Caco-2 (cell line): ENCODE measurements at regions of chr17 and their contacts with region 1.

Region 1: DNA sequence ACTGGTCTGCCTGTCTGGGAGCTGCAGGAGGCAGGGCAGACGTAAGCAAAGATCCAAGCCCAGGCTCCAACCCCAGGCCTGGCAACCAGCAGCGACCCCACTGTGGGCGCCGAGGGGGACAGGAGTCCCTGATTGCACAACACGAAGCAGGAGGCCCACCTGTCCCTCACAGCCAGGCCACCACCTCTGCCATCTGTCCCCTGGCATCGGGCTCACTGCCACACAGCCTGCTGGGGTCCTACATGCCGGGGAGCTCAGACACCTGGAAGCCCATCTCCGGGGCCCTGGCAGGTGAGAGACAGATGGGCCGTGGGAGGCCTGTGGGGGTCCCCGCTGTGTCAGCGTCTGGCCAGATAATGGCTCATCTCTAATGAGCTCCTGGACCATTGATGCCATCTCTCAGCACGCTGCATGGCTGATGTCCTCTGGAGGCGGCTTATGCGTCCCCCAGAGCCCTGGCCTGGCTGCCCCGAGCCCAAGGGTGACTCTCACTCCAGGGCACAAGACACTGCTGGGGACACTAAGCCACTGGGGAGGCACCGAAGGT is 11.3 kb upstream of the RASD1 start:
- DNase-seq: no peak
- H3K4me3 ChIP-seq: no peak overlapping the region
- H3K4me3 Mint-ChIP-seq: no peak overlapping the region
- H3K27ac Mint-ChIP-seq: no peak overlapping the region
- H3K4me1 ChIP-seq: no peaks in the 10 kb centered on the region
- H3K4me1 Mint-ChIP-seq: no peaks in the 10 kb centered on the region
- H3K27me3 ChIP-seq: no peaks in the 10 kb centered on the region
- H3K27me3 Mint-ChIP-seq: no peaks in the 10 kb centered on the region
- CTCF ChIP-seq: no peak

Region 2: GRCh38 chr17:17322516-17323510 is 184.7 kb before region 1 on chr17:
- CTCF ChIA-PET with region 1: no interaction called
- POLR2A ChIA-PET with region 1: no interaction called
- intact Hi-C with region 1: no loop called
- DNase-seq: peak in 1 of 2 experiments; percentile 36
- H3K4me3 ChIP-seq: no peak overlapping the region
- H3K4me3 Mint-ChIP-seq: no peak overlapping the region
- H3K27ac Mint-ChIP-seq: no peak overlapping the region
- H3K4me1 ChIP-seq: no peaks in the 10 kb centered on the region
- H3K4me1 Mint-ChIP-seq: no peaks in the 10 kb centered on the region
- H3K27me3 ChIP-seq: no peaks in the 10 kb centered on the region
- H3K27me3 Mint-ChIP-seq: no peaks in the 10 kb centered on the region
- CTCF ChIP-seq: no peak

Region 3: GRCh38 chr17:17467720-17468119 is 39.8 kb before region 1 on chr17:
- CTCF ChIA-PET with region 1: no interaction called
- POLR2A ChIA-PET with region 1: no interaction called
- intact Hi-C with region 1: no loop called
- DNase-seq: no peak
- H3K4me3 ChIP-seq: no peak overlapping the region
- H3K4me3 Mint-ChIP-seq: no peak overlapping the region
- H3K27ac Mint-ChIP-seq: no peak overlapping the region
- H3K4me1 ChIP-seq: no peaks in the 10 kb centered on the region
- H3K4me1 Mint-ChIP-seq: no peaks in the 10 kb centered on the region
- H3K27me3 ChIP-seq: no peaks in the 10 kb centered on the region
- H3K27me3 Mint-ChIP-seq: peaks cover 4% of the 10 kb centered on the region
- CTCF ChIP-seq: no peak

Region 4: DNA sequence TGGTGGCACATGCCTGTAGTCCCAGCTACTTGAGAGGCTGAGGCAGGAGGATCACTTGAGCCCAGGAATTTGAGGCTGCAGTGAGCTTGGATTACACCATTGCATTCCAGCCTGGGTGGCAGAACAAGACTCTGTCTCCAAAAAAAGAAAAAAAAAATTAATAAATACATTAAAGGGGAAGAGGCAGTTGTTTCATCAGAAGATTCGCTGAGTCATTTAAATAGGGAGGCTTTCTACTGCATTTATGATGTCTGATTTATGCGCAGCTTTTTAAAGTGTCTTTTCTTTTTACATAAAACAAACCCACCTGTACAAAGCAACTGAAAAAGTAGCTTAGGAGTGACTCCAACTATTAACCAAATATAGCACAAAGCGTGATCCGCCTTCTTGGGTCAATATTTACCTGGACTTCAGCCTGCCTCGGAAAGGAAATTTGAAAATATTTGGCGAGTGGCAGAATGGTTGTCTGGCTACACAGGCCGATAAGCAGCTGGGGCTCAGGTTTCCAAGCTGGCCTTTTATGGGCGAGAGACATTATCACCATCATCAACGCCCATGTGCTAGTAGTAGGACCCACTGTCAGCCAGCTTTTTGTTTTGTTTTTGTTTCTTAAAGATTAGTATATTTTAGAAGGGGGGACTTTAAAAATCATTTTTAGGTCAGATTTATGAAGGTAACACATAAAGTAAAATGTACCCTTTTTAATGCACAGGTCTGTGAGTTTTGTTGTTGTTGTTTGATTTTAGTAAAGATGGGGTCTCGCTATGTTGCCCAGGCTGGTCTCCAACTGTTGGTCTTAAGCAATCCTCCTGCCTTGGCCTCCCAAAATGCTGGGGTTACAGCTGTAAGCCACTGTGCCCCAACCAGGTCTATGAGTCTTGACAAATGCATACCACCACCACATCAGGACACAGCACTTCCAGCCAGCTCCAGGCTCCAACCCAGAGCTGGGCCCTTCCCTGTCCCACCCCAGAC is 31.2 kb after region 1 on chr17:
- CTCF ChIA-PET with region 1: no interaction called
- POLR2A ChIA-PET with region 1: no interaction called
- intact Hi-C with region 1: loop called (anchors 1 kb)
- DNase-seq: peak; percentile 92
- H3K4me3 ChIP-seq: no peak overlapping the region
- H3K4me3 Mint-ChIP-seq: peak overlapping the region; percentile 27
- H3K27ac Mint-ChIP-seq: peak overlapping the region; percentile 90
- H3K4me1 ChIP-seq: peaks cover 42% of the 10 kb centered on the region
- H3K4me1 Mint-ChIP-seq: peaks cover 19% of the 10 kb centered on the region
- H3K27me3 ChIP-seq: no peaks in the 10 kb centered on the region
- H3K27me3 Mint-ChIP-seq: no peaks in the 10 kb centered on the region
- CTCF ChIP-seq: no peak